Activated CD8-positive, alpha-beta memory T cell treated with anti-CD3 and anti-CD28 coated beads, Interleukin-2, amount 10 ng/mL, durations not matched to agents 7 days and 5 days (primary cell): ENCODE measurements at regions of chr14 and their contacts with region 1.

Region 1: DNA sequence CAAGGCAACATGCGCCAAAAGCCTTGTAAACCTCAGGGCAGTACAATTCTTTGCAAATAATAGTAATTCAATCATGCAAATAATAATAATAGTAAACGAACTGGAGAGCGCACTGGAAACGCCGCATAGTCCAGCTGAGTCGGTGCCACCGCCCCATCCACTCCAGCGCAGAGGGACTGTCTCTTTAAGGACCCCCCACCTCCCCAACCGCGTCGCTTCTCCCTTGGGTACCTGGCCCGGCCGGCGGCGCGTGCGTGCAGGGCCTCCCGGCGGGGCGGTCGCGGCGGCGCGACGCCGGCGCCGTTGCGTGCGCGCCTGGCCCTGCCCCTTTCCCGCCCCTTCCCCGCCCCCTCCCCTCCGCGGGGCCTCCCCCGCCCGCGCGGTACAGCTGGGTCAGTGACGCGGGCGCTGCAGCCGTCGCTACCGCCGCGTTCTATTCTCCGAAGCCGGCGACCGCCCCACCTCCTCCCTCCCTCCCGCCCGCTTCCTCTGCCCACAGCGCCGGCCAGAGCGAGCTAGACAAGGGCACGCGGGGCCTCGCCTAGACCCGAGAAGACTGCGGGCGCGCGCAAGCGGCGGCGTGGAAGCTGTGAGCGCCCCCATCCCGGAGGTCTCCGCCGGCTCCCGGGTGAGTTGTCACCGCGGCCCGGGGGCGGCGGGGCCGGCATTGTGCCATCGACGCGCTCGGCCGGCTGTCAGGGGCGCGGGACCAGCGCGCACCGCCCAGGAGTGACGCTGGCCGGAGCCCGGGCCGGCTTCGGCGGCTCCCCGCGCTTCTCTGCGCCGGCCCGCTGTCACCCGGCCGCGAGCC is at the start of gene SUSD6:
- DNase-seq: peak; percentile 91
- ATAC-seq: peak; percentile 71
- H3K4me3 Mint-ChIP-seq: peak within 1 kb of the TSS; percentile 96
- H3K27ac Mint-ChIP-seq: peak within 1 kb of the TSS; percentile 99
- H3K4me1 Mint-ChIP-seq: peaks cover 59% of the 10 kb centered on the region
- H3K27me3 Mint-ChIP-seq: no peaks in the 10 kb centered on the region
- total RNA-seq, gene SUSD6: 62.9 to 66.4 TPM

Region 2: DNA sequence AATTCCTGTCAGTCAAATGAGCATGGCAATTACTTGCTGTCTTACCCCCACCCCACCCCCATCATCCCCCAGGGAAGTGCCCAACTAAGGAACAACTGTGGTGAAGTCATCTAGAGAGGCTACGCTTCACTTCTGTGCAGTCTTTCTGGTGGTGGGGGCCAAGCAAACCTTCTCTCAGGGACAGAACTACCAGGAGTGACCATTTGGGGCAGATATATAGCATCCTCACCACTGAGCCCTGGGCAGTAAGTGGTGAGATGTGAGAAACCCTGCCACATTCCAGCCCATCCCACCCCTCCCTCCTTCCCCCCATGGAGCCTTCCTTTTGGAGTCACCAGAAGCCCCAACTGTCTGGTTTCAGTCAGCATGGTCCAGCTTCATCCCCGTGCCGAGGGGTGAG is 353.9 kb before region 1 on chr14:
- CTCF ChIA-PET with region 1: no interaction called
- DNase-seq: no peak
- ATAC-seq: no peak
- H3K4me3 Mint-ChIP-seq: no peak overlapping the region
- H3K27ac Mint-ChIP-seq: no peak overlapping the region
- H3K4me1 Mint-ChIP-seq: peaks cover 6% of the 10 kb centered on the region
- H3K27me3 Mint-ChIP-seq: peaks cover 72% of the 10 kb centered on the region

Region 3: GRCh38 chr14:69625299-69626131 is 14.1 kb after region 1 on chr14:
- CTCF ChIA-PET with region 1: interaction called, 16 read pairs
- DNase-seq: peak; percentile 95
- ATAC-seq: peak; percentile 91
- H3K4me3 Mint-ChIP-seq: peak overlapping the region; percentile 58
- H3K27ac Mint-ChIP-seq: peak overlapping the region; percentile 96
- H3K4me1 Mint-ChIP-seq: peaks cover 92% of the 10 kb centered on the region
- H3K27me3 Mint-ChIP-seq: no peaks in the 10 kb centered on the region

Region 4: GRCh38 chr14:69755784-69756183 is 144.4 kb after region 1 on chr14:
- CTCF ChIA-PET with region 1: no interaction called
- DNase-seq: no peak
- ATAC-seq: no peak
- H3K4me3 Mint-ChIP-seq: no peak overlapping the region
- H3K27ac Mint-ChIP-seq: no peak overlapping the region
- H3K4me1 Mint-ChIP-seq: peaks cover 11% of the 10 kb centered on the region
- H3K27me3 Mint-ChIP-seq: no peaks in the 10 kb centered on the region